Activated CD8-positive, alpha-beta T cell treated with anti-CD3 and anti-CD28 coated beads, Interleukin-2, amount 10 ng/mL, durations not matched to agents 7 days and 5 days (primary cell): ENCODE measurements at regions of chr3 and their contacts with region 1.

Region 1: DNA sequence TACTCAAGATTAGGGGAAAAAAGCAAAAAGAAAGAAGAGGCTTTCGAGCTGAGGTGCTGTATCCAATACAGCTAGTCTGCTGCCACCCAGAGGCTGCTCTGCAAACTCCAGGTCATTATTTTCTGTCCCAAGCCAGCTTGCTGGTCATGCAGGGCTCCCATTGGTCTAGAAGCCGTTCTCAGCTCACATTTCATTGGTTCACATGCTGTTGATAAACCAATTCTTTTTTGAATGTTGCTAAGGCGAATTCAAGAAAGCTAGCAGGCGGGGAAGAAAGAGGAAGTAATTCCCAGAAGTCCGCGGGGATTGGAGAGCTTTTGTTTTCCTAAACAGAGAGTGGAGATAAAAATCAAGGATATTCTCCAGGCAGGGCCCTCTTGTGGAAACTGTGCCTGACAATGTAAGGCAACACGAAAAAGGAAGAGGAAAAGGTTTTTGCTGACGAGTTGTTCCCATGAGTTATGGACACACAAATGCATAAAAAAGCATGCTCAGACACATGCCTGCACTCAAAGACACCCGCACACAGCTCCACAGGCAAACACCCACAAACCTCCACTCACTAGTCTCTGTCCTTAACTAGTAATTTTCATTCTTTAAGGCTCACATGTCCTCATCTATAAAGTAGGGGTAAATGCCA is 33.4 kb downstream of the FSTL1 start:
- DNase-seq: peak; percentile 94
- ATAC-seq: peak; percentile 99
- H3K4me3 Mint-ChIP-seq: peak overlapping the region; percentile 76
- H3K27ac Mint-ChIP-seq: peak overlapping the region; percentile 43
- H3K4me1 Mint-ChIP-seq: peaks cover 20% of the 10 kb centered on the region
- H3K27me3 Mint-ChIP-seq: peaks cover 8% of the 10 kb centered on the region

Region 2: DNA sequence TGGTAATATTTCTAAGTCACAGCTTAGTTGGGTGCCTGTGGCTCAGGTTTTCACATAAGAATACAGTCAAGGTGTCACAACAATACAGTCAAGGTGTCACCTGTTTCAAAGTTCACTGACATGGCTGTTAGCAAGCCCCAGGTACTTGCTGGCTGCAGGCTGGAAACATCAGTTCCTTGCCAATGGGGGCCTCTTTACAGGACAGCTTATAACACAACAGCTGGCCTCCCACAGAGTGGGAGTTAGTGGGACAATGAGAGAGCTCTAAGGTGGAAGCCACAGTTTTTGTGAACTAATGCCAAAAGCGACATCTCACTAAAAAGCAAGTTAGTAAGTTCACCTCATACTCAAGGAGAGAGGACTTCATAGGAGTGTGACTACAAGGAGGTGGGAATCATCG is 177.7 kb before region 1 on chr3:
- CTCF ChIA-PET with region 1: interaction called, 164 read pairs
- POLR2A ChIA-PET with region 1: interaction called, 3 read pairs
- DNase-seq: no peak
- ATAC-seq: no peak
- H3K4me3 Mint-ChIP-seq: no peak overlapping the region
- H3K27ac Mint-ChIP-seq: no peak overlapping the region
- H3K4me1 Mint-ChIP-seq: no peaks in the 10 kb centered on the region
- H3K27me3 Mint-ChIP-seq: peaks cover 37% of the 10 kb centered on the region

Region 3: GRCh38 chr3:120348981-120349818 is 68.2 kb before region 1 on chr3 and contains the start of gene LRRC58:
- CTCF ChIA-PET with region 1: interaction called, 35 read pairs
- POLR2A ChIA-PET with region 1: interaction called, 11 read pairs
- DNase-seq: peak; percentile 90
- ATAC-seq: peak; percentile 91
- H3K4me3 Mint-ChIP-seq: peak within 1 kb of the TSS; percentile 89
- H3K27ac Mint-ChIP-seq: peak within 1 kb of the TSS; percentile 89
- H3K4me1 Mint-ChIP-seq: peaks cover 45% of the 10 kb centered on the region
- H3K27me3 Mint-ChIP-seq: peaks cover 19% of the 10 kb centered on the region
- total RNA-seq, gene LRRC58: 25.5 to 27.9 TPM

Region 4: GRCh38 chr3:120442975-120443517 is 25.7 kb after region 1 on chr3:
- CTCF ChIA-PET with region 1: interaction called, 31 read pairs
- POLR2A ChIA-PET with region 1: no interaction called
- DNase-seq: no peak
- ATAC-seq: no peak
- H3K4me3 Mint-ChIP-seq: no peak overlapping the region
- H3K27ac Mint-ChIP-seq: no peak overlapping the region
- H3K4me1 Mint-ChIP-seq: no peaks in the 10 kb centered on the region
- H3K27me3 Mint-ChIP-seq: peaks cover 26% of the 10 kb centered on the region

Region 5: DNA sequence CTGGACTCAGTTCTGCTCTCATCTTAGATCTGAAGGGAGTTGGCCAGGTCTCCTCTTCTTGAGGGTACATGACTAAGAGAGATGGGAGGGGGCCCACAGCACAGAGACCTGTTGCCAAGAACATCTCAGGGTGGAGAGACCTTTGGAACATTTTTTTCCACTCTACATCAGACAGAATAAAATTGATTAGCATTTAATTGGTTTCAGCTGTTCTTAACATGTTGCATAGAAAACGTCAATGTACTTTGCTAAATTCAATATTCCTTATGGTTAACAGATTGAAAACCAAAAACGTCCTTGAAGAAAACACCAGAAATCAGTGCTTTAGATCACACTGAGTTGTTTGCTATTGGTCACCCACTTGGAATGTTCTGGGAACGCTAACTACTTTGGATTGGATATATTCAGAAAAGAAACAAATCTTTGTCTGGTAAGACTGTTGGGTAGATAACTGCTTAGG is 69.8 kb after region 1 on chr3:
- CTCF ChIA-PET with region 1: no interaction called
- POLR2A ChIA-PET with region 1: no interaction called
- DNase-seq: no peak
- ATAC-seq: no peak
- H3K4me3 Mint-ChIP-seq: no peak overlapping the region
- H3K27ac Mint-ChIP-seq: no peak overlapping the region
- H3K4me1 Mint-ChIP-seq: no peaks in the 10 kb centered on the region
- H3K27me3 Mint-ChIP-seq: peaks cover 20% of the 10 kb centered on the region

Region 6: GRCh38 chr3:120567370-120568201 is 150.2 kb after region 1 on chr3:
- CTCF ChIA-PET with region 1: interaction called, 16 read pairs
- POLR2A ChIA-PET with region 1: no interaction called
- DNase-seq: no peak
- ATAC-seq: peak; percentile 63
- H3K4me3 Mint-ChIP-seq: no peak overlapping the region
- H3K27ac Mint-ChIP-seq: no peak overlapping the region
- H3K4me1 Mint-ChIP-seq: peaks cover 2% of the 10 kb centered on the region
- H3K27me3 Mint-ChIP-seq: peaks cover 2% of the 10 kb centered on the region